ENCODE measurements at regions of chr4 and their contacts with region 1.

Region 1: DNA sequence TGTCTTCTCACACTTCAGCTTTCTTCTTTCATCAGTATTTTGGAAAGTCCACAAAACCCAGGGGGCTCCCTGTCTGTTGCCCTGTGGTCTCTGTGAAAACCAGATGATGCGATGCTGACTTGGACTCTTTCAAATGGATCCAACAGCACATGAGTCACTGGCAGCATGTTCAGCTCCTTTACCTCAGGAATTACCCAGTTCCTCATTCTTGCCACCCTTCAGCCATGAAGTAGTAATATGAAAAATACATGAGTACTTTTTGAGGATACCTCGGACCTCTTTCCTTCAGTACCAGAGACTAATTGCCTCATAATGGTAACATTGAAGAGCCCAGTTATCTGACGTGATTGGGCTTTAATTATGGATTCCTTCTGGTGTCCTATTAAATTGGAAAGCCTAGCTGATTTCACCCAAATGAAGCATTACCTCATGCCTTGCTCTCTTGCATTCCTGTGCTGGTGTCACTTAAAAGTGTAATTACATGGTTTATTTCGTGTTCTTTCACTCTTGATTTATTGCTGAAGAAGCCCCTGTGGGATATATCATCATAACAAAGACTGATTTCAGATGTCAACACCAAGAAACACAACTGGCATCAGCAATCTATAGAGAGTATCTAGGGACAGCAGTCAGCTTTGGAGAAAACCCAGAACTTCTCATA is 63.4 kb downstream of the NFKB1 start:
- DNase-seq: peak; percentile 37
- ATAC-seq: peak; percentile 91
- H3K4me3 Mint-ChIP-seq: peak overlapping the region; percentile 61
- H3K27ac Mint-ChIP-seq: peak overlapping the region; percentile 90
- H3K4me1 Mint-ChIP-seq: peaks cover 85% of the 10 kb centered on the region
- H3K27me3 Mint-ChIP-seq: no peaks in the 10 kb centered on the region
- CTCF ChIP-seq: no peak

Region 2: DNA sequence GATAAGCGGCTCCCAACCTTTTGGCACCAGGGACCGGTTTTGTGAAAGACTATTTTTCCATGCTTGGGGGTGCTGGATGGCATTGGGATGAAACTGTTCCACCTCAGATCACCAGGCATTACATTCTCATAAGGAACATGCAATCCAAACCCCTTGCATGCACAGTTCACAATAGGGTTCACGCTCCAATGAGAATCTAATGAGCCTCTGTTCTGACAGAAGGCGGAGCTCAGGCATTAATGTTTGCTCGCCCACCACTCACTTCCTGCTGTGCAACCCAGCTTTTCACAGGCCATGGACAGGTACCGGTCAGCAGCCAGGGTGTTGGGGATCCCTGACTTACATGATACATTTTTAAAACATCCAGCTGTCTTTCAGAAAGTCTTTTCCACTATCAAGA is 406.5 kb before region 1 on chr4:
- CTCF ChIA-PET with region 1: no interaction called
- POLR2A ChIA-PET with region 1: no interaction called
- intact Hi-C with region 1: no loop called
- DNase-seq: no peak
- ATAC-seq: no peak
- H3K4me3 Mint-ChIP-seq: no peak overlapping the region
- H3K27ac Mint-ChIP-seq: no peak overlapping the region
- H3K4me1 Mint-ChIP-seq: no peaks in the 10 kb centered on the region
- H3K27me3 Mint-ChIP-seq: no peaks in the 10 kb centered on the region
- CTCF ChIP-seq: no peak

Region 3: DNA sequence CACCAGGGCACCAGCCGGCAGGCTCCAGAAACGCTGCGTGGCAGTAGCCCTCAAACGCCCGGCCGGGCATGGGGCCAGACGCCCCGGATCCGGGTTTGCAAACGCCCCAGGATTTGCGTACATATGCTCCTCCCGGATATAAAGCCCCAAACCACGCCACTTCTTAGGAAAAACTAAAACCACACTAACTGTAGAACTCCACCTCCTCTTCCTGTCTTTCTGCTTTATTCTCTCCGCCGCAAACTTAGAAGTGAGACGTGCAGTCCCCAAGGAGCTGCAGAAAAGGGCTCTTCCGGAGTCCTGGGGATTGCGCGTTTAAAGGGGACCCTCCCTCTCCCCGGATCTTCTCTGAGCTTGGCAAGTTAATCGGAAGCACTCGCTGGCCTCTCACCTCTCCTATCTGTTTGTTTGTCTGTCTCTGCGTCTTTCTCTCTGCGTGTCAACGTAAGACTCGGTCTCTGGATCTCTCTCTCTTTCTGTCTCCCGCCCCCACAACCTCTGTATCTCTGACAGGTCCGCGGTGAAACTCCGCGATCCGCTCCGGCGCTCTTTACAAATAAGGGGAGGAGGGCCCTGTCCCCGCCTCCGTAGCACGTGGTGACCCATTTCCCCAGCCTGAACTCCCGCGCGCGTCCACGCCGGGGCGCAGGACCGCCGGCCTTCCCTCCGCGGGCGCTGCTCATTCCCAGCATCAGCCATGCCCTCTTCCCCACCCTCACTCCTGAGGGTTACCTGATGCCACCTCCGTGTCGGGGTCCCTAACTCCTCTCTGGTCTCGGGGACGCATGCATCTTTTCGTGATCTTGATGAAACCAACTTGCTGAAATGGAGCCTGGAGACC is 219.4 kb before region 1 on chr4 and contains the start of gene SLC39A8:
- CTCF ChIA-PET with region 1: no interaction called
- POLR2A ChIA-PET with region 1: interaction called, 7 read pairs
- intact Hi-C with region 1: loop called (anchors 2 kb)
- DNase-seq: peak; percentile 82
- ATAC-seq: peak; percentile 87
- H3K4me3 Mint-ChIP-seq: peak within 1 kb of the TSS; percentile 89
- H3K27ac Mint-ChIP-seq: peak within 1 kb of the TSS; percentile 93
- H3K4me1 Mint-ChIP-seq: peaks cover 34% of the 10 kb centered on the region
- H3K27me3 Mint-ChIP-seq: no peaks in the 10 kb centered on the region
- CTCF ChIP-seq: no peak
- total RNA-seq, gene SLC39A8: 17.9 and 18.1 TPM in 2 replicates

Region 4: GRCh38 chr4:102525097-102525496 is 39.4 kb before region 1 on chr4:
- CTCF ChIA-PET with region 1: interaction called, 3 read pairs
- POLR2A ChIA-PET with region 1: interaction called, 13 read pairs
- intact Hi-C with region 1: loop called (anchors 1 kb)
- DNase-seq: no peak
- ATAC-seq: no peak
- H3K4me3 Mint-ChIP-seq: peak overlapping the region; percentile 46
- H3K27ac Mint-ChIP-seq: peak overlapping the region; percentile 50
- H3K4me1 Mint-ChIP-seq: peaks cover 88% of the 10 kb centered on the region
- H3K27me3 Mint-ChIP-seq: no peaks in the 10 kb centered on the region
- CTCF ChIP-seq: no peak

Region 5: DNA sequence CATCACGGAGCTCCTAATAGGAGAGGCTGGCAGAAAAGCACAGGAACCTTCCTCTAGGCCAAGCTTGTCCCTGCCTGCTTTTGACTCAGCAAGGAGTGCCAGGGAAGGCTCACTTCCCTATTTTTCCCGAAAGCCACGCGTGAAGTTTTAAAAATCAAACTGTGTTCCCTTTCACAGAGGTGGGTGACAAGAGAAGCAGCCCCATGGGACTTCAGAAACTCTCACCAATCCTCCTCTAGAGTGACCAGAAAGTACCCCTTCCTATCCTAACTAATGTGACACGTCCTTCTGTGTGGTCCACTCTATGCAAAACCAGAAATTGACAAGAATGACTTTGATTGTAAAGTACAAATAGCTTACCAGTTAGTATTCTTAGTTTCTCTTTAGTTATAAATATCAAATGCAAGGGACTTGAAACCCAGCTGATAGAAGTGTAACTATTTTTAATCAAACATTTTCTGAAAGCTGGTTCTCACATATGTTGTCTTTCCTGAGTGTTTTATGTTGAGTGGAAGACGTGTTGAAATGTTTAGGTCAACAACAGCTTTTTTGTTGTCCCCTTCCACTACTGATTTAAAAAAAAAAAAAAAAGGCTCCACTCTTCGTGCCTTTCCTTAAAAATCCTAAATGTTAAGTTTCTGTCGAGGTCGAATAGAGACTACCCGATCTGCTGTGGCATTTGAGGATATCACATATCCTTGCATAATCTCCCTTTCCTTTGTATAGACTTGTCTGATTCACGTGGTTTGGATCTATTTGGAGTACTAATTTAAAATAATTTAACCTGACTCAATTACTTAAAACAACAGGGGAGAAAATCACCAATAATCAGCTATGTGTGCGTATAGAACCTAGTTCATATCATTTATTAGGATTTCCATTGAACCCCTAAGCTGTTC is 21.2 kb before region 1 on chr4:
- CTCF ChIA-PET with region 1: no interaction called
- POLR2A ChIA-PET with region 1: interaction called, 12 read pairs
- intact Hi-C with region 1: loop called (anchors 1 kb)
- DNase-seq: no peak
- ATAC-seq: no peak
- H3K4me3 Mint-ChIP-seq: no peak overlapping the region
- H3K27ac Mint-ChIP-seq: peak overlapping the region; percentile 51
- H3K4me1 Mint-ChIP-seq: peaks cover 37% of the 10 kb centered on the region
- H3K27me3 Mint-ChIP-seq: no peaks in the 10 kb centered on the region
- CTCF ChIP-seq: no peak

Region 6: GRCh38 chr4:102578819-102579218 is 14.3 kb after region 1 on chr4:
- CTCF ChIA-PET with region 1: interaction called, 3 read pairs
- POLR2A ChIA-PET with region 1: interaction called, 10 read pairs
- intact Hi-C with region 1: no loop called
- DNase-seq: no peak
- ATAC-seq: no peak
- H3K4me3 Mint-ChIP-seq: no peak overlapping the region
- H3K27ac Mint-ChIP-seq: peak overlapping the region; percentile 7
- H3K4me1 Mint-ChIP-seq: peaks cover 47% of the 10 kb centered on the region
- H3K27me3 Mint-ChIP-seq: no peaks in the 10 kb centered on the region
- CTCF ChIP-seq: no peak

Region 7: GRCh38 chr4:102760645-102761295 is 196.2 kb after region 1 on chr4 and contains the start of gene MANBA:
- CTCF ChIA-PET with region 1: no interaction called
- POLR2A ChIA-PET with region 1: interaction called, 6 read pairs
- intact Hi-C with region 1: loop called (anchors 1 kb)
- DNase-seq: peak; percentile 77
- ATAC-seq: peak; percentile 79
- H3K4me3 Mint-ChIP-seq: peak within 1 kb of the TSS; percentile 93
- H3K27ac Mint-ChIP-seq: peak within 1 kb of the TSS; percentile 96
- H3K4me1 Mint-ChIP-seq: peaks cover 51% of the 10 kb centered on the region
- H3K27me3 Mint-ChIP-seq: no peaks in the 10 kb centered on the region
- CTCF ChIP-seq: no peak
- total RNA-seq, gene MANBA: 41.2 and 55.3 TPM in 2 replicates

Region 8: GRCh38 chr4:103011378-103012025 is 447.0 kb after region 1 on chr4:
- CTCF ChIA-PET with region 1: no interaction called
- POLR2A ChIA-PET with region 1: no interaction called
- intact Hi-C with region 1: no loop called
- DNase-seq: no peak
- ATAC-seq: no peak
- H3K4me3 Mint-ChIP-seq: no peak overlapping the region
- H3K27ac Mint-ChIP-seq: no peak overlapping the region
- H3K4me1 Mint-ChIP-seq: no peaks in the 10 kb centered on the region
- H3K27me3 Mint-ChIP-seq: no peaks in the 10 kb centered on the region
- CTCF ChIP-seq: no peak

Measured in activated B cell treated with CpG ODN at 0.5 μM for 24 hours (primary cell).